Activated CD4-positive, alpha-beta memory T cell treated with anti-CD3 and anti-CD28 coated beads, Interleukin-2, amount 10 ng/mL, durations not matched to agents 7 days and 5 days (primary cell): ENCODE measurements at regions of chr17 and their contacts with region 1.

Region 1: GRCh38 chr17:47698749-47699535 is 5.0 kb downstream of the TBKBP1 start:
- DNase-seq: peak; percentile 87
- H3K4me3 Mint-ChIP-seq: no peak overlapping the region
- H3K27ac Mint-ChIP-seq: peak overlapping the region; percentile 86
- H3K4me1 Mint-ChIP-seq: peaks cover 63% of the 10 kb centered on the region
- H3K27me3 Mint-ChIP-seq: peaks cover 3% of the 10 kb centered on the region

Region 2: GRCh38 chr17:47687748-47688147 is 11.2 kb before region 1 on chr17:
- CTCF ChIA-PET with region 1: interaction called, 6 read pairs
- POLR2A ChIA-PET with region 1: interaction called, 14 read pairs
- DNase-seq: no peak
- H3K4me3 Mint-ChIP-seq: no peak overlapping the region
- H3K27ac Mint-ChIP-seq: no peak overlapping the region
- H3K4me1 Mint-ChIP-seq: peaks cover 25% of the 10 kb centered on the region
- H3K27me3 Mint-ChIP-seq: peaks cover 2% of the 10 kb centered on the region

Region 3: DNA sequence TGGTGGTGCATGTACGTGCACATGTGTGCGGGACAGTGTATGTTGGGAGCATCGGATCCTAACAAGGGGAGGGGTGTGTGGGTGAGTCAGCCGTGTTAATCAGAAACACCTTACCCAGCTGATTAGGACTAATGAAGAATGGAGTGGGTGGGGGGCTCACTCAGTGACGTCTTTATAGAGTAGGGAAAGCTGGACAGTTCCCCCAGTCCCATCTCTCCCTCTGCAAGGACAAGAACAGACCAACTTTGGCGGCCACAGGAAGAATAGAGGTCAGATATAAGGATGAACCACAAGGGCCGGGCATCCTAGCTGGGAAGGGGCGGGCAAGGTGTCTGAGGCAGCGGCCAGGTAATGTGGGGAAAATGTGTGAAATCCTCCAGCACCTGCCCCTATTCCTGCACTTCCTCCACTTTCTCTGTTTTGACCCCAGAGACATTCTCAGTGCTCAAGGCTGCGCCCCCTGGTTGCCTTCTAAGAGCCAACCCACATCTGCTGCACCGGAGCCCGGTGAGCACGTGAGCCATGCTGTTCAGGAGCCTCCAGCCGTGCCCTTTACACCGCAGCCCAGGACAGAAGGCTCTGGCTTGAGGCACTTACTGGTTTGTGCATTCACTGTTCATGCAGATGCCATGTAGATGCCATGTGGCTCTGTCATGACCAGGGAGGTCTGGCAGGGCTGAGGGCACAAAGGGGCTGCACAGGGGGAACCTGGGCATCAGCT is 15.2 kb after region 1 on chr17:
- CTCF ChIA-PET with region 1: interaction called, 99 read pairs
- POLR2A ChIA-PET with region 1: interaction called, 210 read pairs
- DNase-seq: no peak
- H3K4me3 Mint-ChIP-seq: no peak overlapping the region
- H3K27ac Mint-ChIP-seq: peak overlapping the region; percentile 21
- H3K4me1 Mint-ChIP-seq: peaks cover 73% of the 10 kb centered on the region
- H3K27me3 Mint-ChIP-seq: peaks cover 14% of the 10 kb centered on the region

Region 4: GRCh38 chr17:47733047-47733673 is 34.2 kb after region 1 on chr17 and contains the start of gene TBX21:
- CTCF ChIA-PET with region 1: interaction called, 135 read pairs
- POLR2A ChIA-PET with region 1: interaction called, 463 read pairs
- DNase-seq: peak; percentile 94
- H3K4me3 Mint-ChIP-seq: peak within 1 kb of the TSS; percentile 100
- H3K27ac Mint-ChIP-seq: peak within 1 kb of the TSS; percentile 99
- H3K4me1 Mint-ChIP-seq: peaks cover 68% of the 10 kb centered on the region
- H3K27me3 Mint-ChIP-seq: no peaks in the 10 kb centered on the region
- total RNA-seq, gene TBX21: 58.3 to 61.1 TPM

Region 5: GRCh38 chr17:47789611-47790561 is 90.9 kb after region 1 on chr17:
- CTCF ChIA-PET with region 1: interaction called, 12 read pairs
- POLR2A ChIA-PET with region 1: no interaction called
- DNase-seq: peak; percentile 63
- H3K4me3 Mint-ChIP-seq: peak overlapping the region; percentile 58
- H3K27ac Mint-ChIP-seq: no peak overlapping the region
- H3K4me1 Mint-ChIP-seq: peaks cover 14% of the 10 kb centered on the region
- H3K27me3 Mint-ChIP-seq: peaks cover 66% of the 10 kb centered on the region

Region 6: DNA sequence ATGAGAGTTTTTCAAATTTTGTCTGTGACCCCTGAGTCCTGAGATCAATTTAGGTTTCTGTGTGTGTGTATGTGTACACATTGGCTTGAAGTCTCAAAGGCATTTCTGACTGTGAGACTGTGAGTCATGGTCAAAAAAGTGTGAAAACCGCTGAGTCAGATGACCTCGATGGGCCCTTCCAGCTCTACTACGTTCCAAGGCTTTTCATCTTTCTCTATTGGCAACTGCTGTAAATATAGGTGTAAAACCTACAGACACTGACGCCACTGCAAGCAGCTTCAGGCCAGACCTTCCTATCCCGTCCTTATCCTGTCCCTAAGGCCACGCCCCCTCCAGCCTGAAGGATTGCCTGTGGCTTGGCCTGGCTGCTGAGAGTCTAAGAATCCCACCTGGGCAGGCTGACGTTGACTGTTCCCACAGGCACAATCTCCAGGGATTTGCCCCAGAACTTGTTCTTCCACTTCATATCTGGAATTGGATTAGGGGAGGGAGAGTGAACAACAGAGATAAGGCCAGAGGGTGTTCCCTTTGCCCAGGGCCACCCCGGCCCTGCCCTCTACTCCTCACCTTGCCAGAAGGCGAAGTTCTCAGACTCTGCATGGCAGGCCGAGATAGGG is 111.4 kb after region 1 on chr17:
- CTCF ChIA-PET with region 1: no interaction called
- POLR2A ChIA-PET with region 1: no interaction called
- DNase-seq: peak; percentile 40
- H3K4me3 Mint-ChIP-seq: no peak overlapping the region
- H3K27ac Mint-ChIP-seq: peak overlapping the region; percentile 46
- H3K4me1 Mint-ChIP-seq: peaks cover 21% of the 10 kb centered on the region
- H3K27me3 Mint-ChIP-seq: no peaks in the 10 kb centered on the region

Region 7: GRCh38 chr17:47831003-47831933 is 132.3 kb after region 1 on chr17 and contains the starts of genes LRRC46 and MRPL10:
- CTCF ChIA-PET with region 1: interaction called, 7 read pairs
- POLR2A ChIA-PET with region 1: interaction called, 12 read pairs
- DNase-seq: peak; percentile 94
- H3K4me3 Mint-ChIP-seq: peak within 1 kb of the TSS; percentile 90
- H3K27ac Mint-ChIP-seq: peak within 1 kb of the TSS; percentile 100
- H3K4me1 Mint-ChIP-seq: peaks cover 69% of the 10 kb centered on the region
- H3K27me3 Mint-ChIP-seq: no peaks in the 10 kb centered on the region
- total RNA-seq, gene LRRC46: 0.45 to 0.53 TPM
- total RNA-seq, gene MRPL10: 91.5 to 95.7 TPM

Region 8: GRCh38 chr17:47905221-47905781 is 206.4 kb after region 1 on chr17:
- CTCF ChIA-PET with region 1: no interaction called
- POLR2A ChIA-PET with region 1: no interaction called
- DNase-seq: no peak
- H3K4me3 Mint-ChIP-seq: no peak overlapping the region
- H3K27ac Mint-ChIP-seq: no peak overlapping the region
- H3K4me1 Mint-ChIP-seq: peaks cover 8% of the 10 kb centered on the region
- H3K27me3 Mint-ChIP-seq: no peaks in the 10 kb centered on the region